ENCODE measurements at regions of chr20 and their contacts with region 1.

Region 1: GRCh38 chr20:2626853-2627541 is 25.4 kb upstream of the NOP56 start:
- DNase-seq: peak; percentile 94
- H3K4me3 ChIP-seq: no peak overlapping the region
- H3K27ac ChIP-seq: no peak overlapping the region
- H3K4me1 ChIP-seq: no peaks in the 10 kb centered on the region
- H3K27me3 ChIP-seq: no peaks in the 10 kb centered on the region
- CTCF ChIP-seq: no peak

Region 2: DNA sequence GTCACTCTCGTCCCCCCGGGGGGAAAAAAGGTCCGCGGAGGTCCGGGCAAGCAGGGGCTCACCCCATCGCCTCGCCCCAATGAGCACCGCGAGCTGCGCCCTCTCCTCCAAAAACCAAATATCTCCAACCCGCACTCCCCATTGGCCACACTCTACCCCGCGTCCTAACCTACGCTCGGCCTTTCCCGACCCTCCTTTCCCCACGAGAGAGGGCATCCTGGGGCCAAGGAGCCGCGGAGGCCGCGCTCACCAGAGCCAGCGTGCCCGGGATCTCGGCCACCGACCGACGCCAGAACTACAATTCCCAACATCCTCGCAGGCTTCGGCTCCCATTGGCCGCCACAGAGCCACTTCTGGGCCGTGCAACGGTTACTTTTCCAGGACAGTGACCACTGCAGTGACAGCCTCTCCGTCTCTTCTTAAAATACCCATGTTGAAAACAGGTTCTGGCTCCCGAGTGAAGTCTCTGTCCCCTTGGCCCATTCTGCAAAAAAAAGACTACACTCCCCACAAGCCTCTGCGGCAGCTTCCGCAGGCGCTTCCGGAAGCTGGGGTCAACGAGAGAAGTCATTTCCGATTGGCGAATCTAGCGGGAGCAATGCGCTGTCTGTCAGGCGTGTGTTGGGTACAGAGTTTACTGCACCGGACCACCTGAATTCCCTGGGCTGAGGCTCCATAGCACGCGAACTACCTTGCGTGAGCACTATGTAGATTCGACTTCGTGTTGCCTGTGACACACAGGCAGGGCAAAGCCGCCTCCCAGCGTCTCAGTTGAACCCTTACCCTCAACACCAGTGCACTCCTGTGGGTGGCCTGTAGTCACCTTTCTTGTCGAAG is 118.1 kb before region 1 on chr20 and contains the start of gene ZNF343:
- CTCF ChIA-PET with region 1: no interaction called
- dilution Hi-C with region 1: no loop called
- in situ Hi-C with region 1: loop called in 1 of 2 experiments (anchors 25 kb)
- intact Hi-C with region 1: no loop called
- DNase-seq: peak; percentile 78
- H3K4me3 ChIP-seq: peak within 1 kb of the TSS; percentile 73 to 87 (median 84)
- H3K27ac ChIP-seq: peak within 1 kb of the TSS; percentile 43
- H3K4me1 ChIP-seq: peaks cover 7% of the 10 kb centered on the region
- H3K27me3 ChIP-seq: no peaks in the 10 kb centered on the region
- CTCF ChIP-seq: peak in 1 of 2 donors; percentile 4
- total RNA-seq, gene ZNF343: 12.0 to 12.9 TPM

Region 3: GRCh38 chr20:2523919-2524708 is 102.9 kb before region 1 on chr20:
- CTCF ChIA-PET with region 1: interaction called, 10 read pairs
- dilution Hi-C with region 1: no loop called
- in situ Hi-C with region 1: loop called in 1 of 2 experiments (anchors 25 kb)
- intact Hi-C with region 1: loop called (anchors 5 kb)
- DNase-seq: peak; percentile 40
- H3K4me3 ChIP-seq: peak overlapping the region; percentile 67 to 91 (median 83)
- H3K27ac ChIP-seq: peak overlapping the region; percentile 34
- H3K4me1 ChIP-seq: peaks cover 6% of the 10 kb centered on the region
- H3K27me3 ChIP-seq: no peaks in the 10 kb centered on the region
- CTCF ChIP-seq: peak; percentile 76 to 94

Region 4: GRCh38 chr20:2585811-2586210 is 41.2 kb before region 1 on chr20:
- CTCF ChIA-PET with region 1: no interaction called
- dilution Hi-C with region 1: no loop called
- in situ Hi-C with region 1: no loop called
- intact Hi-C with region 1: no loop called
- DNase-seq: peak; percentile 60
- H3K4me3 ChIP-seq: no peak overlapping the region
- H3K27ac ChIP-seq: no peak overlapping the region
- H3K4me1 ChIP-seq: peaks cover 8% of the 10 kb centered on the region
- H3K27me3 ChIP-seq: no peaks in the 10 kb centered on the region
- CTCF ChIP-seq: no peak

Region 5: DNA sequence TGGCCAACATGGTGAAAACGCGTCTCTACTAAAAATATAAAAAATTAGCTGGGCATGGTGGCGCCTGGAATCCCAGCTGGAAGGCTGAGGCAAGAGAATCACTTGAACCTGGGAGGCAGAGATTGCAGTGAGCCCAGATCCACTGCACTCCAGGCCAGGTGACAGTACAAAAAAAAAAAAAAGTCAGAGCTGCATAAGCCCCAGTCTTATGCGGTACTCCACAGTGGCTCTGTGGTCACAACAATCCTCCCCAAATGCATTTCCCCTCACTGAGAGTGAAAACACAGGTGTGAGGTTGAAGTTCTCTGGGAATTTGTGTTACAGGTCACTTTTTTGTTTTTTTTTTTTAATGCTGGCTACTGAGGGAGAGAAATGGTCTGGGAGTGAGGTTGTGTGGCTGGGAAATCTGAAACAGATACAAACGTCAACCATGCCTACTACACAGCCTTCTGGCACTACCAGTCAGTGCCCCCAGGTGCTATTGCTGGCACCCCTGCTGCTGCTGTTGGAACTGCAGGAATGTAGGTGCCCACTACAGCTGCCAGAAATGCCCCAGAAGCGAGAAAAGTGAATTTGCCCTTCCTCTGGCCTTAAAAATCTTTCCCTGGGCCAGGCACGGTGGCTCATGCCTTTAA is 424.5 kb after region 1 on chr20:
- CTCF ChIA-PET with region 1: no interaction called
- dilution Hi-C with region 1: no loop called
- in situ Hi-C with region 1: no loop called
- intact Hi-C with region 1: no loop called
- DNase-seq: no peak
- H3K4me3 ChIP-seq: no peak overlapping the region
- H3K27ac ChIP-seq: no peak overlapping the region
- H3K4me1 ChIP-seq: peaks cover 3% of the 10 kb centered on the region
- H3K27me3 ChIP-seq: no peaks in the 10 kb centered on the region
- CTCF ChIP-seq: peak in 1 of 2 donors; percentile 19